ENCODE measurements at regions of chr17 and their contacts with region 1.

Region 1: DNA sequence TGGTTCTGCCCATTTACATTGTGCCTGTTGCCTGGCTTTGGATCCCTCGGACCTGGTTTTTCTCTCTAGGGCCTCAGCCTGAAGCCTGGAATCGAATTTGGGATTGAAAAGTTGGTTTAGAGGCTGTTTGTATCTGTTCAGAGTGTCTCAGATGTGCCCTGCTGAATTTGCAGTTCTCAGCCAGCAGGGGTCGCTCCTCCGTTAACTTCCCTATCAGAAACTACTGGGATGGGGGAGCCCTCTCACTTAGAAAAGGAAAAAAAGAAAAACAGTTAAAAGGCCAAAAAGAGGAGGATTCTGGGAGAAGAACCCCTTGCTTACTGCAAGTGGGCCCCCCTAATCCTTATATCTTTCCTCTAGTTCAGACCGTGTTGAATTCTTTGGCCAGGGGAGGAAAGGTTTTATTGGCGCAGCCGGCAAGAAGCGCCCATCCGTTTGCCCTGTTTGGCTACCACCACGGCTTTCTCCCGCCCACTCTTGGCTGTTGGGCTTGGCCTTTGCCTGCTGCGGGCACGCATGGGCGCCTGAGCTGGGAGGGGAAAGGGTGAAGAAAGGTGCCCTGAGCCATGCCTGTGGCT is 8.7 kb downstream of the FZD2 start:
- DNase-seq: no peak
- H3K4me3 ChIP-seq: no peak overlapping the region
- H3K27ac ChIP-seq: no peak overlapping the region
- H3K4me1 ChIP-seq: peaks cover 0 to 14% (median 6%) of the 10 kb centered on the region in 4 experiments; a peak in 5 of 7 replicates
- H3K27me3 ChIP-seq: peaks cover 0 to 18% (median 6%) of the 10 kb centered on the region in 4 experiments; a peak in 5 of 7 replicates
- CTCF ChIP-seq: peak; percentile 33 to 47 (median 38)
- EP300 ChIP-seq: no peak
- POLR2A ChIP-seq: no peak
- RAD21 ChIP-seq: peak; percentile 28 to 46; a peak in 3 of 4 replicates

Region 2: GRCh38 chr17:44581868-44582267 is 15.9 kb after region 1 on chr17:
- CTCF ChIA-PET with region 1: interaction called, 12 read pairs
- POLR2A ChIA-PET with region 1: interaction called, 4 read pairs
- DNase-seq: no peak
- H3K4me3 ChIP-seq: no peak overlapping the region
- H3K27ac ChIP-seq: no peak overlapping the region
- H3K4me1 ChIP-seq: no peaks in the 10 kb centered on the region; a peak in 1 of 7 replicates
- H3K27me3 ChIP-seq: 0 out of 7 replicates have a peak, but pooled peaks cover 0 to 2% (median 1%) of the 10 kb centered on the region in 4 experiments
- CTCF ChIP-seq: peak; percentile 36 to 51 (median 41); a peak in 3 of 4 replicates
- EP300 ChIP-seq: no peak
- POLR2A ChIP-seq: no peak
- RAD21 ChIP-seq: peak; percentile 36 to 56; a peak in 3 of 4 replicates